ENCODE measurements at regions of chr9 and their contacts with region 1.

Region 1: GRCh38 chr9:26892251-26893029 is at the start of gene CAAP1:
- DNase-seq: peak; percentile 96
- H3K4me3 ChIP-seq: peak within 1 kb of the TSS; percentile 72 to 99 (median 92)
- H3K27ac ChIP-seq: peak within 1 kb of the TSS; percentile 92 to 100 (median 98)
- H3K4me1 ChIP-seq: peaks cover 0 to 25% (median 22%) of the 10 kb centered on the region in 4 donors
- H3K27me3 ChIP-seq: no peaks in the 10 kb centered on the region
- CTCF ChIP-seq: peak in 3 of 4 experiments; percentile 15 to 46 (median 27)
- EP300 ChIP-seq: peak in 1 of 4 donors; percentile 35
- POLR2A ChIP-seq: peak; percentile 65 to 69
- total RNA-seq, gene CAAP1: 10.2 to 18.2 (median 11.5) TPM

Region 2: DNA sequence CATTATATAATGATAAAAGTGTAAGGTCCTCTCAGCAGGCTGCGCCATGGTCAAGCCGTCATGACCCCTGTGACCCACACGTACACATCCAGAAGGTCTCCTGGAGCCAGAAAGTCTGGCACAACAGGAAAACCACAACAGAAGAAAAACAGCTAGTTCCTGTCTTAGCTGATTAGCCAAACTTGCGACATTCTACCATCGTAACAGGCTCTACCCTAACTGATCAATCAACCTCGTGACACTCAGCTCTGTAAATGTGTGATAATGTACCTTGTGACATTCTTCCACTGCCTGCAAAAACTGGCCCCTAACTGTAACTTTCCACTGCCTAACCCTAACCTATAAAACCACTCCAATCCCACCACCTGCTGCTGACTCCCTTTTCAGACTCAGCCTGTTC is 897.8 kb before region 1 on chr9:
- intact Hi-C with region 1: no loop called
- DNase-seq: no peak
- H3K4me3 ChIP-seq: no peak overlapping the region
- H3K27ac ChIP-seq: no peak overlapping the region
- H3K4me1 ChIP-seq: no peaks in the 10 kb centered on the region
- H3K27me3 ChIP-seq: no peaks in the 10 kb centered on the region
- CTCF ChIP-seq: no peak
- EP300 ChIP-seq: no peak
- POLR2A ChIP-seq: no peak

Region 3: GRCh38 chr9:26946753-26947727 is 54.6 kb after region 1 on chr9 and contains the start of gene PLAA:
- intact Hi-C with region 1: loop called (anchors 2 kb)
- DNase-seq: peak; percentile 95
- H3K4me3 ChIP-seq: peak within 1 kb of the TSS; percentile 77 to 99 (median 82)
- H3K27ac ChIP-seq: peak within 1 kb of the TSS; percentile 93 to 97 (median 96)
- H3K4me1 ChIP-seq: peaks cover 0 to 35% (median 24%) of the 10 kb centered on the region in 4 donors
- H3K27me3 ChIP-seq: no peaks in the 10 kb centered on the region
- CTCF ChIP-seq: no peak
- EP300 ChIP-seq: no peak
- POLR2A ChIP-seq: peak in 1 of 2 donors; percentile 27
- total RNA-seq, gene PLAA: 20.8 to 32.1 (median 28.0) TPM

Region 4: GRCh38 chr9:26975693-26976059 is 83.2 kb after region 1 on chr9:
- intact Hi-C with region 1: loop called (anchors 5 kb)
- DNase-seq: no peak
- H3K4me3 ChIP-seq: no peak overlapping the region
- H3K27ac ChIP-seq: no peak overlapping the region
- H3K4me1 ChIP-seq: peaks cover 0 to 7% (median 5%) of the 10 kb centered on the region in 4 donors
- H3K27me3 ChIP-seq: no peaks in the 10 kb centered on the region
- CTCF ChIP-seq: peak in 3 of 4 experiments; percentile 21 to 51 (median 50)
- EP300 ChIP-seq: no peak
- POLR2A ChIP-seq: no peak